ENCODE measurements at regions of chr2 and their contacts with region 1.

Region 1: DNA sequence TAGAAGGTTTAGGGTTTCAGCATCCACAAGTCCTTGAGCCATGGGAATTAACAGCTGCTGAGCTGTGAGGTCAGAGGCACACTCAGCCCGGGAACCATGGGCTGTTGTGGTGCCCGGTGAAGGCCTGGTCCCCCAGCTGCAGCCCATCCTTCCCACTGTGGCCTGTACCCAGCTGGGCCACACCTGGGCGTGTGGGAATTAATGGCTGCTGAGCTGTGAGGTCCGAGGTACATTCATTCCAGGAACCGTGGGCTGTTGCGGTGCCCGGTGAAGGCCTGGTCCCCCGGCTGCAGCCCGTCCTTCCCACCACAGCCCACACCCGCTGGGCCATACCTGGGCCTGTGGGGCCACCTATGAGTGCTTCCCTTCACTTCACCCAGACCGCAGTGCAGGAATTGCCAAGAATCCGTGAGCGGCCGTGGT is 25.2 kb downstream of the TMEM18 start:
- DNase-seq: no peak
- H3K4me3 ChIP-seq: no peak overlapping the region; a peak in 1 of 4 replicates
- H3K27ac ChIP-seq: no peak overlapping the region
- H3K4me1 ChIP-seq: no peaks in the 10 kb centered on the region; a peak in 1 of 4 replicates
- H3K27me3 ChIP-seq: no peaks in the 10 kb centered on the region
- CTCF ChIP-seq: no peak
- EP300 ChIP-seq: no peak
- RAD21 ChIP-seq: no peak

Region 2: GRCh38 chr2:501130-501529 is 150.8 kb before region 1 on chr2:
- CTCF ChIA-PET with region 1: no interaction called
- POLR2A ChIA-PET with region 1: no interaction called
- DNase-seq: peak; percentile 59
- H3K4me3 ChIP-seq: no peak overlapping the region
- H3K27ac ChIP-seq: no peak overlapping the region
- H3K4me1 ChIP-seq: peaks cover 0 to 23% of the 10 kb centered on the region in 2 experiments; a peak in 2 of 4 replicates
- H3K27me3 ChIP-seq: no peaks in the 10 kb centered on the region
- CTCF ChIP-seq: no peak
- EP300 ChIP-seq: no peak
- RAD21 ChIP-seq: no peak

Region 3: GRCh38 chr2:667332-667999 is 15.5 kb after region 1 on chr2:
- CTCF ChIA-PET with region 1: interaction called, 11 read pairs
- POLR2A ChIA-PET with region 1: interaction called, 3 read pairs
- DNase-seq: peak; percentile 76
- H3K4me3 ChIP-seq: no peak overlapping the region
- H3K27ac ChIP-seq: no peak overlapping the region
- H3K4me1 ChIP-seq: no peaks in the 10 kb centered on the region
- H3K27me3 ChIP-seq: no peaks in the 10 kb centered on the region
- CTCF ChIP-seq: peak; percentile 74
- EP300 ChIP-seq: no peak
- RAD21 ChIP-seq: peak; percentile 72

Measured in SK-N-SH (cell line).